ENCODE measurements at regions of chr5 and their contacts with region 1.

Region 1: GRCh38 chr5:170791325-170791954 is 7.9 kb downstream of the GABRP start:
- DNase-seq: peak; percentile 71 to 86 (median 76)
- ATAC-seq: peak; percentile 90 to 99 (median 96)
- H3K4me3 ChIP-seq: no peak overlapping the region
- H3K27ac ChIP-seq: no peak overlapping the region
- H3K4me1 ChIP-seq: no peaks in the 10 kb centered on the region
- H3K27me3 ChIP-seq: no peaks in the 10 kb centered on the region
- CTCF ChIP-seq: peak; percentile 28 to 57 (median 44)

Region 2: DNA sequence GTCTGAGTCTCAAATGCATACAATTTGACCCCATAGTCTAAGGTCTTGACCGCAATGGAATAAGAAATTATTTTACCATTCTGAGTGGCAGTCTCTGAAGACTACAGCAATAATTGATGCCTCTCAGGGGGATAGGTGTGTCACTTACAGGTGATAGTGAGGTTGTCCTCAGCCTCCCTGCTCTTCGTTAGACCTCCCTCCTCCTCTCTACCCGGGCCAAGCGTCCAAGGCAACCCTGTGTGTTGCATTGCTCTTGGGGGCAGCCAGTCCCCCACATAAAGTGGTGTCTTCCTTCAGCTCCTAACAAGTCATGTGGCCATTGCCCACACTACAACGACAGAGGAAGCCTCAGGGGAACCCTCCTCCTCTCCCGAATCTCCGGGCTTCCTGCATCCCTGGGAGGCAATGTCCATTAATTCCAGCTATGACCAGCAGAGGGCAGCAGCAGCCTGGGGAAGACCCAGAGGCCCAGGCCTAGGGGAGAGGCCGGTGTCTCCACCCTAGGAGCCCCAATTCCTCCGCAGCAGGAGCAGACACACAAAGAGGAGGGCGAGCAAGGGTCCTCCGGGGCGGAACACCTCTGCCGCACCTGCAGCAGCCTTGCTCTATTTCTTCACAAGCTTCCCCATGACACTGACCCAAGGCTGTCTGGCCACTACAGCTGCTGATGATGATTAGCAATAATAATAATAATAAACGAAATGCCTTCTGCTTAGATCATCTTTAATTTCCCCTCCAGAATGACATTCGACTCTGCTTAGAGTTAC is 152.8 kb before region 1 on chr5:
- intact Hi-C with region 1: loop called in 2 of 3 experiments (anchors 10 kb)
- DNase-seq: peak in 5 of 6 donors; percentile 24 to 84 (median 72)
- ATAC-seq: peak; percentile 67 to 91 (median 80)
- H3K4me3 ChIP-seq: no peak overlapping the region
- H3K27ac ChIP-seq: no peak overlapping the region
- H3K4me1 ChIP-seq: no peaks in the 10 kb centered on the region
- H3K27me3 ChIP-seq: peaks cover 0 to 6% (median 0%) of the 10 kb centered on the region in 4 donors
- CTCF ChIP-seq: peak; percentile 75 to 81 (median 78)

Region 3: GRCh38 chr5:170747851-170748250 is 43.6 kb before region 1 on chr5:
- intact Hi-C with region 1: loop called (anchors 2 to 10 kb)
- DNase-seq: peak in 2 of 6 donors; percentile 32 to 37
- ATAC-seq: no peak
- H3K4me3 ChIP-seq: no peak overlapping the region
- H3K27ac ChIP-seq: peak overlapping the region in 3 of 4 donors; percentile 19 to 74 (median 64)
- H3K4me1 ChIP-seq: peaks cover 0 to 20% (median 12%) of the 10 kb centered on the region in 3 donors
- H3K27me3 ChIP-seq: no peaks in the 10 kb centered on the region
- CTCF ChIP-seq: peak in 2 of 4 donors; percentile 10 to 21